ENCODE measurements at regions of chr18 and their contacts with region 1.

Region 1: GRCh38 chr18:21955757-21956652 is 213.4 kb upstream of the GATA6 start:
- DNase-seq: peak; percentile 59
- H3K4me3 Mint-ChIP-seq: no peak overlapping the region
- H3K27ac Mint-ChIP-seq: no peak overlapping the region
- H3K4me1 Mint-ChIP-seq: no peaks in the 10 kb centered on the region
- H3K27me3 Mint-ChIP-seq: peaks cover 13% of the 10 kb centered on the region

Region 2: GRCh38 chr18:21194871-21195771 is 760.9 kb before region 1 on chr18:
- intact Hi-C with region 1: loop called (anchors 1 kb)
- DNase-seq: no peak
- H3K4me3 Mint-ChIP-seq: no peak overlapping the region
- H3K27ac Mint-ChIP-seq: no peak overlapping the region
- H3K4me1 Mint-ChIP-seq: no peaks in the 10 kb centered on the region
- H3K27me3 Mint-ChIP-seq: peaks cover 9% of the 10 kb centered on the region

Region 3: GRCh38 chr18:21489119-21489750 is 466.8 kb before region 1 on chr18:
- intact Hi-C with region 1: loop called (anchors 1 kb)
- DNase-seq: no peak
- H3K4me3 Mint-ChIP-seq: no peak overlapping the region
- H3K27ac Mint-ChIP-seq: no peak overlapping the region
- H3K4me1 Mint-ChIP-seq: no peaks in the 10 kb centered on the region
- H3K27me3 Mint-ChIP-seq: no peaks in the 10 kb centered on the region

Region 4: GRCh38 chr18:21851327-21851972 is 104.6 kb before region 1 on chr18:
- intact Hi-C with region 1: no loop called
- DNase-seq: no peak
- H3K4me3 Mint-ChIP-seq: no peak overlapping the region
- H3K27ac Mint-ChIP-seq: no peak overlapping the region
- H3K4me1 Mint-ChIP-seq: peaks cover 12% of the 10 kb centered on the region
- H3K27me3 Mint-ChIP-seq: no peaks in the 10 kb centered on the region

Region 5: GRCh38 chr18:21897811-21898210 is 58.2 kb before region 1 on chr18:
- intact Hi-C with region 1: loop called (anchors 1 kb)
- DNase-seq: no peak
- H3K4me3 Mint-ChIP-seq: no peak overlapping the region
- H3K27ac Mint-ChIP-seq: no peak overlapping the region
- H3K4me1 Mint-ChIP-seq: no peaks in the 10 kb centered on the region
- H3K27me3 Mint-ChIP-seq: peaks cover 7% of the 10 kb centered on the region

Region 6: GRCh38 chr18:21933931-21934765 is 21.9 kb before region 1 on chr18:
- intact Hi-C with region 1: no loop called
- DNase-seq: no peak
- H3K4me3 Mint-ChIP-seq: no peak overlapping the region
- H3K27ac Mint-ChIP-seq: no peak overlapping the region
- H3K4me1 Mint-ChIP-seq: no peaks in the 10 kb centered on the region
- H3K27me3 Mint-ChIP-seq: no peaks in the 10 kb centered on the region